Left cardiac atrium (tissue), 4 donors: ENCODE measurements at regions of chr4 and their contacts with region 1.

Region 1: GRCh38 chr4:89906777-89907521 is 12.3 kb downstream of the MMRN1 start:
- DNase-seq: no peak
- ATAC-seq: no peak

Region 2: DNA sequence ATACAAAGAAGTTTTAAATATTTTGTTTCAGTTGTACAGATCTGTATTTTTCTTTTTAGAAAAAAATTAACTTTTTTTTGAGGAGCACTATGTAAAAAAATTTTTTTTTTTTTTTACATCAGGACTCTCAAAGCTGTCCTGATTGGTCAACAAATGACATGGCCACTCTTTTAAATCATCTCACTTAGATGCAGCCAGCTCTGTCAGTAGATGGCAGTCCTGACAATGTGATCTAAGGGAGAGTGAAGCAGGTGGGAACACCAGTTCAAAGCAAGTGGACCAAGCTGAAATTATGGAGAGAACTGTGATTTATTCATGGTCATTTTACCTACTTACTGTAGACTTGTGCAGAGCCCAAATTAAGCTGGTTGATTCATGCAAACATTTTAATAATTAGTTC is 424.7 kb before region 1 on chr4:
- intact Hi-C with region 1: loop called in 1 of 2 experiments (anchors 10 kb)
- DNase-seq: no peak
- ATAC-seq: peak in 1 of 2 donors; percentile 69

Region 3: GRCh38 chr4:89860971-89861370 is 46.0 kb before region 1 on chr4:
- intact Hi-C with region 1: no loop called
- DNase-seq: no peak
- ATAC-seq: no peak